ENCODE measurements at regions of chr1 and their contacts with region 1.

Region 1: GRCh38 chr1:26692793-26693490 is 2.9 kb upstream of the ARID1A start:
- DNase-seq: peak; percentile 90 to 98
- ATAC-seq: peak; percentile 77 to 78
- H3K4me3 ChIP-seq: peak overlapping the region; percentile 47
- H3K27ac ChIP-seq: peak overlapping the region; percentile 100
- H3K4me1 ChIP-seq: peaks cover 24% of the 10 kb centered on the region
- CTCF ChIP-seq: no peak
- EP300 ChIP-seq: no peak; a peak in 1 of 5 replicates
- POLR2A ChIP-seq: peak; percentile 41; the same call in 1 of the 2 replicates
- RAD21 ChIP-seq: 0 out of 5 replicates have a peak, but pooled peaks have one; percentile 8 to 14

Region 2: GRCh38 chr1:26705788-26706311 is 12.9 kb after region 1 on chr1:
- CTCF ChIA-PET with region 1: interaction called, 6 read pairs
- POLR2A ChIA-PET with region 1: interaction called, 18 read pairs
- DNase-seq: peak; percentile 72 to 90
- ATAC-seq: peak; percentile 91 to 94
- H3K4me3 ChIP-seq: no peak overlapping the region; the same call in 2 of the 3 replicates
- H3K27ac ChIP-seq: peak overlapping the region; percentile 81 to 93
- H3K4me1 ChIP-seq: peaks cover 76% of the 10 kb centered on the region
- CTCF ChIP-seq: no peak
- EP300 ChIP-seq: peak; percentile 16 to 63; a peak in 2 of 5 replicates
- POLR2A ChIP-seq: no peak
- RAD21 ChIP-seq: 0 out of 5 replicates have a peak, but pooled peaks of 1 of the 2 experiments have one; percentile 19

Measured in A549 (cell line).